GM12878 (cell line): ENCODE measurements at regions of chr17 and their contacts with region 1.

Region 1: GRCh38 chr17:70320673-70321345 is 151.5 kb downstream of the KCNJ2 start:
- DNase-seq: no peak
- ATAC-seq: no peak
- H3K4me3 ChIP-seq: no peak overlapping the region
- H3K27ac ChIP-seq: no peak overlapping the region
- H3K4me1 ChIP-seq: no peaks in the 10 kb centered on the region
- H3K27me3 ChIP-seq: no peaks in the 10 kb centered on the region
- CTCF ChIP-seq: no peak
- EP300 ChIP-seq: no peak
- POLR2A ChIP-seq: no peak
- RAD21 ChIP-seq: no peak

Region 2: GRCh38 chr17:70238228-70238627 is 82.6 kb before region 1 on chr17:
- CTCF ChIA-PET with region 1: no interaction called
- POLR2A ChIA-PET with region 1: no interaction called
- RAD21 ChIA-PET with region 1: no interaction called
- SMC1A ChIA-PET with region 1: no interaction called
- in situ Hi-C with region 1: no loop called
- intact Hi-C with region 1: no loop called
- DNase-seq: no peak
- ATAC-seq: no peak
- H3K4me3 ChIP-seq: no peak overlapping the region
- H3K27ac ChIP-seq: no peak overlapping the region
- H3K4me1 ChIP-seq: no peaks in the 10 kb centered on the region
- H3K27me3 ChIP-seq: no peaks in the 10 kb centered on the region
- CTCF ChIP-seq: no peak
- EP300 ChIP-seq: no peak
- POLR2A ChIP-seq: no peak
- RAD21 ChIP-seq: no peak

Region 3: GRCh38 chr17:70307430-70308225 is 13.2 kb before region 1 on chr17:
- CTCF ChIA-PET with region 1: interaction called, 5 read pairs
- POLR2A ChIA-PET with region 1: interaction called, 3 read pairs
- RAD21 ChIA-PET with region 1: no interaction called
- SMC1A ChIA-PET with region 1: interaction called, 13 read pairs
- in situ Hi-C with region 1: no loop called
- intact Hi-C with region 1: no loop called
- DNase-seq: no peak
- ATAC-seq: peak; percentile 40; the same call in 1 of the 3 replicates
- H3K4me3 ChIP-seq: no peak overlapping the region
- H3K27ac ChIP-seq: no peak overlapping the region
- H3K4me1 ChIP-seq: no peaks in the 10 kb centered on the region
- H3K27me3 ChIP-seq: no peaks in the 10 kb centered on the region
- CTCF ChIP-seq: no peak
- EP300 ChIP-seq: no peak
- POLR2A ChIP-seq: no peak
- RAD21 ChIP-seq: no peak

Region 4: GRCh38 chr17:70332356-70333210 is 11.8 kb after region 1 on chr17:
- CTCF ChIA-PET with region 1: interaction called, 8 read pairs
- POLR2A ChIA-PET with region 1: interaction called, 5 read pairs
- RAD21 ChIA-PET with region 1: interaction called, 3 read pairs
- SMC1A ChIA-PET with region 1: interaction called, 12 read pairs
- in situ Hi-C with region 1: no loop called
- intact Hi-C with region 1: no loop called
- DNase-seq: no peak
- ATAC-seq: no peak
- H3K4me3 ChIP-seq: no peak overlapping the region
- H3K27ac ChIP-seq: no peak overlapping the region
- H3K4me1 ChIP-seq: no peaks in the 10 kb centered on the region
- H3K27me3 ChIP-seq: no peaks in the 10 kb centered on the region
- CTCF ChIP-seq: no peak
- EP300 ChIP-seq: no peak
- POLR2A ChIP-seq: no peak
- RAD21 ChIP-seq: no peak

Region 5: GRCh38 chr17:70338946-70339354 is 18.1 kb after region 1 on chr17:
- CTCF ChIA-PET with region 1: interaction called, 6 read pairs
- POLR2A ChIA-PET with region 1: interaction called, 5 read pairs
- RAD21 ChIA-PET with region 1: interaction called, 3 read pairs
- SMC1A ChIA-PET with region 1: interaction called, 12 read pairs
- in situ Hi-C with region 1: no loop called
- intact Hi-C with region 1: no loop called
- DNase-seq: no peak
- ATAC-seq: peak; percentile 86
- H3K4me3 ChIP-seq: no peak overlapping the region
- H3K27ac ChIP-seq: no peak overlapping the region
- H3K4me1 ChIP-seq: no peaks in the 10 kb centered on the region
- H3K27me3 ChIP-seq: no peaks in the 10 kb centered on the region
- CTCF ChIP-seq: no peak
- EP300 ChIP-seq: peak in 1 of 2 experiments; percentile 39; a peak in 1 of 4 replicates
- POLR2A ChIP-seq: no peak
- RAD21 ChIP-seq: no peak